Caco-2 (cell line): ENCODE measurements at regions of chr1 and their contacts with region 1.

Region 1: GRCh38 chr1:13759088-13759487 is 59.1 kb downstream of the PRDM2 start:
- DNase-seq: peak; percentile 41 to 71
- H3K4me3 ChIP-seq: no peak overlapping the region
- H3K4me3 Mint-ChIP-seq: peak overlapping the region; percentile 56
- H3K27ac Mint-ChIP-seq: peak overlapping the region; percentile 88
- H3K4me1 ChIP-seq: peaks cover 46% of the 10 kb centered on the region
- H3K4me1 Mint-ChIP-seq: no peaks in the 10 kb centered on the region
- H3K27me3 ChIP-seq: no peaks in the 10 kb centered on the region
- H3K27me3 Mint-ChIP-seq: no peaks in the 10 kb centered on the region
- CTCF ChIP-seq: peak in 1 of 2 experiments; percentile 1

Region 2: GRCh38 chr1:13536571-13536970 is 222.5 kb before region 1 on chr1:
- CTCF ChIA-PET with region 1: no interaction called
- POLR2A ChIA-PET with region 1: no interaction called
- intact Hi-C with region 1: no loop called
- DNase-seq: no peak
- H3K4me3 ChIP-seq: no peak overlapping the region
- H3K4me3 Mint-ChIP-seq: no peak overlapping the region
- H3K27ac Mint-ChIP-seq: no peak overlapping the region
- H3K4me1 ChIP-seq: no peaks in the 10 kb centered on the region
- H3K4me1 Mint-ChIP-seq: no peaks in the 10 kb centered on the region
- H3K27me3 ChIP-seq: no peaks in the 10 kb centered on the region
- H3K27me3 Mint-ChIP-seq: no peaks in the 10 kb centered on the region
- CTCF ChIP-seq: no peak

Region 3: GRCh38 chr1:13550663-13551062 is 208.4 kb before region 1 on chr1:
- CTCF ChIA-PET with region 1: no interaction called
- POLR2A ChIA-PET with region 1: no interaction called
- intact Hi-C with region 1: no loop called
- DNase-seq: no peak
- H3K4me3 ChIP-seq: no peak overlapping the region
- H3K4me3 Mint-ChIP-seq: no peak overlapping the region
- H3K27ac Mint-ChIP-seq: no peak overlapping the region
- H3K4me1 ChIP-seq: no peaks in the 10 kb centered on the region
- H3K4me1 Mint-ChIP-seq: no peaks in the 10 kb centered on the region
- H3K27me3 ChIP-seq: no peaks in the 10 kb centered on the region
- H3K27me3 Mint-ChIP-seq: peaks cover 3% of the 10 kb centered on the region
- CTCF ChIP-seq: no peak

Region 4: DNA sequence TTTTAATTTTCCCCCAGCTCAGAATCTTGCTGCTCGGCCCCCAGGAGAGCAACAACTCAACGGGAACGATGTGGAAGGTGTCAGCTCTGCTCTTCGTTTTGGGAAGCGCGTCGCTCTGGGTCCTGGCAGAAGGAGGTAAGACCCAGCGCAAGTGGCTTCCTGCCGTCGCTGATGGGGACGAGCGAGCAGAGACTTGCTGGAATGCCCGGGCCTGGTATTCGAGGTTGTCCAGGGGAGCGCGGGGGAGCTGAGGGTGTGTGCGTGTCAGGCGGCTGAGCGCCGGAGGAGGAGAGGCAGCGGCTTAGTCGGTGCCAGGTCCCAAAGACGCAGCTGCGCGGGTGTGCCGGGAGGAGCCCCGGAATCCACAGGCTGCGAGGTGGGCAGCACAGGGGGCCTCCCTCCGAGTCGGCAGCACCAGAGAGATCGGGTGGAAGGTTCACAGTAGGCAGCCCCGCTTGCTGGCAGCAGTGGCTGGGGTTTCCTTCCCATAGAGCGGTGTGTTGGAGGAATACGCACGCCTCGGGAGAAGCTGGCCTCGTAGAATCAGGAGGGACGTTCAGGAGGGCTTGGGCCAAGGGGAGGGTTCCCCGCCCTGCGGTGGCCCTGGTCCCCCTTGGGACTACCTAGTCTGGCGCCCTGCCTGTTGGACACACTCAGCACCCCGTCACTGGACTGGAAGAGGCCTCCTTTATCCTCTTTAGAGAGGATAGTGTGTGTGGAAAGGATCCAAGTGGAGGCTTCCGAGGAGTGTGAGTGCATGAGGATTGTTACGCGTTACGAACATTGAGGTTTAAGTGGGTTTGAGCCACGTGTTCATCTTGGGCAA is 174.9 kb before region 1 on chr1:
- CTCF ChIA-PET with region 1: no interaction called
- POLR2A ChIA-PET with region 1: no interaction called
- intact Hi-C with region 1: no loop called
- DNase-seq: no peak
- H3K4me3 ChIP-seq: no peak overlapping the region
- H3K4me3 Mint-ChIP-seq: no peak overlapping the region
- H3K27ac Mint-ChIP-seq: no peak overlapping the region
- H3K4me1 ChIP-seq: peaks cover 13% of the 10 kb centered on the region
- H3K4me1 Mint-ChIP-seq: peaks cover 7% of the 10 kb centered on the region
- H3K27me3 ChIP-seq: no peaks in the 10 kb centered on the region
- H3K27me3 Mint-ChIP-seq: no peaks in the 10 kb centered on the region
- CTCF ChIP-seq: no peak

Region 5: DNA sequence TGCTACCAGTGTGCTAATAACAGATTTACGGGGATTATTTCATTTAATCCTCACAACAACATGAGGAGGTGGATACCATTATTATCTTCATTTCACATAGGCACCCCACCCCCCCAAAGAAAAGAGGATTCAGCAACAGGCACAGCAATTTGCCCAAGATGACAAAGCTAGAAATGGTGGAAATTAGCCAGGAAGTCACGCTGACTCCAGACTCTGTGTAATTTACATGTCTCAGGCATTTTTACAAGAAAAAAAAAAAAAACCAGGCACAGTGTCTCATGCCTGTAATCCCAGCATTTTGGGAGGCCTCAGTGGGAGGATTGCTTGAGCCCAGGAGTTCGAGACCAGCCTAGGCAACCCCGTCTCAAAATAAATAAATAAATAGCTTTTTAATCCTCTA is 96.6 kb before region 1 on chr1:
- CTCF ChIA-PET with region 1: no interaction called
- POLR2A ChIA-PET with region 1: no interaction called
- intact Hi-C with region 1: no loop called
- DNase-seq: no peak
- H3K4me3 ChIP-seq: no peak overlapping the region
- H3K4me3 Mint-ChIP-seq: no peak overlapping the region
- H3K27ac Mint-ChIP-seq: no peak overlapping the region
- H3K4me1 ChIP-seq: no peaks in the 10 kb centered on the region
- H3K4me1 Mint-ChIP-seq: no peaks in the 10 kb centered on the region
- H3K27me3 ChIP-seq: no peaks in the 10 kb centered on the region
- H3K27me3 Mint-ChIP-seq: no peaks in the 10 kb centered on the region
- CTCF ChIP-seq: no peak

Region 6: DNA sequence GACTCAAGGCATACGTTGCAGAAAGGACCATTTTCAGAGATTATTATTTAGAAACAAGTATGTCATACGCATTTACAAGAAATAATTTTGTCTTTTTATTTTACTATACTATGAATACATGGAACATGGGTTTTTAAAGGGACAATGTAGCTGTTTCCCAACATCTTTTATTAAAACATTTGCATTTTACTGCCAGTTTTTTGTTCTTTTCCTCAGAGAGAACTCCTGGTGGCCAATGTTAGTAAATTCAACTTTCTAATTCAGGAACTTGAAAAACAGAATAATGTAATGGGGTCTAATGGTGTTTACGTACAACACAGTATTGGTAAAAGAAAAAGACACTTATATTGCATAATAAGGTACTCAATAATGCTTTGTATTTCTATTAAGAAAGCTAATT is 44.2 kb before region 1 on chr1:
- CTCF ChIA-PET with region 1: interaction called, 10 read pairs
- POLR2A ChIA-PET with region 1: no interaction called
- intact Hi-C with region 1: no loop called
- DNase-seq: no peak
- H3K4me3 ChIP-seq: no peak overlapping the region
- H3K4me3 Mint-ChIP-seq: no peak overlapping the region
- H3K27ac Mint-ChIP-seq: no peak overlapping the region
- H3K4me1 ChIP-seq: no peaks in the 10 kb centered on the region; the same call in 1 of the 2 replicates
- H3K4me1 Mint-ChIP-seq: no peaks in the 10 kb centered on the region
- H3K27me3 ChIP-seq: no peaks in the 10 kb centered on the region
- H3K27me3 Mint-ChIP-seq: no peaks in the 10 kb centered on the region
- CTCF ChIP-seq: no peak

Region 7: DNA sequence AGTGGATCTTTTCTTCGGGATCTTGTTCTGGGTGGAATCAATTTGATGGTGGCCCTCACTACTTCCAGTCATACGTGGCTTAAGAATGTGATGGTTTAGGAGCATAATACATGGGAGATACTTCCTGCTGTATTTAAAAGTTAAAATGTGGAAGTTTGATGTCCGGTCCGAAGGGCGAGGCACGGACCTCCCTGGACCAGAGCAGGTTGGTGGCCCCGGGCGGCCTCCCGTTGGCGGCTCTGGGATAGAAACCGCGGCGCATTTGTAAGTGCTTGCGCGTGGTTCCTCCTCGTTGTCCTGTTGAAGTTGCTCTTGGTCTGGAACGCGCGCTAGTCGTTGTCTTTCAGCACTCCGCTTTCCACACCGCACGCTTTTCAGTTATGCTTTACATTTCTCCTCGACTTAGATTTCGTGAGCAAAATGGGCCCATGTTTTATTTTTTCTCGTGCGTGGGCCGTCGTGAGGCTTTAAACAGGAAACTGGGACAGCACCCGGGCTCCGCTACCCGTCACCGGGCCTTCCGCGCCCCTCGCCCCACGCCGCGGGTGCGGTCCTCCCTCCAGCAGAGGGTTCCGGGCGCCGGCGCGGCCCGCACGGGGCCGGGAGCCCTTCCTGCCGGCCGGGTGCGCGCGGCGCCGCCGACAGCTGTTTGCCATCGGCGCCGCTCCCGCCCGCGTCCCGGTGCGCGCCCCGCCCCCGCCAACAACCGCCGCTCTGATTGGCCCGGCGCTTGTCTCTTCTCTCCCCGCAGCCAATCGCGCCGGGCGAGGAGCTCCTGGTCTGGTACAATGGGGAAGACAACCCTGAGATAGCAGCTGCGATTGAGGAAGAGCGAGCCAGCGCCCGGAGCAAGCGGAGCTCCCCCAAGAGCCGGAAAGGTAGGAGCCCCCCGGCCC is 10.2 kb before region 1 on chr1:
- CTCF ChIA-PET with region 1: interaction called, 7 read pairs
- POLR2A ChIA-PET with region 1: interaction called, 18 read pairs
- intact Hi-C with region 1: loop called (anchors 1 kb)
- DNase-seq: peak; percentile 94 to 95
- H3K4me3 ChIP-seq: peak overlapping the region; percentile 83
- H3K4me3 Mint-ChIP-seq: peak overlapping the region; percentile 84
- H3K27ac Mint-ChIP-seq: peak overlapping the region; percentile 84
- H3K4me1 ChIP-seq: 0 out of 2 replicates have a peak, but pooled peaks cover 7% of the 10 kb centered on the region
- H3K4me1 Mint-ChIP-seq: peaks cover 9% of the 10 kb centered on the region
- H3K27me3 ChIP-seq: no peaks in the 10 kb centered on the region
- H3K27me3 Mint-ChIP-seq: no peaks in the 10 kb centered on the region
- CTCF ChIP-seq: peak in 1 of 2 experiments; percentile 2

Region 8: DNA sequence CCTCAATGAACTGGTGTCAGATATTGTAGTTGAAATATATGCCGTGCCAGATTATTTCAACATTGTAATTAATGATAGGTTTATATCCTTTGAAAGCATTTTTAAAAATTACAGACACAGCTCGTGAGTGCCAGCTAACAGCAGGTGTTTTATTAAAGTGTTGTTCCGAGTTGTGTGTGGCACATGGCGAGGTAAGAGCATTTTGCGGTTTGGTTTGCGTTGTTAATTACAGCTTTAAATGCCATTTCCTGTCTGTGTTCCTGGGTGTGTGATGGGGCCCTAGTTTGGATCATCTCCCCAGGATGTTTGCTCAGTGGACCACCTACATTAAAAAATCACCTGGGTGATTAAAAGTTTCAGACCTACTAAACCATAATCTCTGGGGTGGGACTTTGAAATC is 38.3 kb after region 1 on chr1:
- CTCF ChIA-PET with region 1: no interaction called
- POLR2A ChIA-PET with region 1: no interaction called
- intact Hi-C with region 1: loop called (anchors 5 kb)
- DNase-seq: no peak
- H3K4me3 ChIP-seq: no peak overlapping the region
- H3K4me3 Mint-ChIP-seq: no peak overlapping the region
- H3K27ac Mint-ChIP-seq: no peak overlapping the region
- H3K4me1 ChIP-seq: peaks cover 17% of the 10 kb centered on the region
- H3K4me1 Mint-ChIP-seq: peaks cover 9% of the 10 kb centered on the region
- H3K27me3 ChIP-seq: no peaks in the 10 kb centered on the region
- H3K27me3 Mint-ChIP-seq: no peaks in the 10 kb centered on the region
- CTCF ChIP-seq: no peak